CD8-positive, alpha-beta T cell (primary cell): ENCODE measurements at regions of chr6 and their contacts with region 1.

Region 1: GRCh38 chr6:81752138-81752920 is at the start of gene TENT5A:
- DNase-seq: peak; percentile 69 to 92 (median 85)
- ATAC-seq: peak; percentile 77
- H3K4me3 ChIP-seq: peak within 1 kb of the TSS; percentile 89 to 97
- H3K4me3 Mint-ChIP-seq: peak within 1 kb of the TSS; percentile 96
- H3K27ac ChIP-seq: peak within 1 kb of the TSS; percentile 82 to 87
- H3K27ac Mint-ChIP-seq: peak within 1 kb of the TSS; percentile 95
- H3K4me1 ChIP-seq: peaks cover 25% of the 10 kb centered on the region
- H3K4me1 Mint-ChIP-seq: peaks cover 41% of the 10 kb centered on the region
- H3K27me3 ChIP-seq: no peaks in the 10 kb centered on the region
- H3K27me3 Mint-ChIP-seq: peaks cover 13% of the 10 kb centered on the region
- CTCF ChIP-seq: no peak
- total RNA-seq, gene TENT5A: 7.5 to 7.7 TPM

Region 2: DNA sequence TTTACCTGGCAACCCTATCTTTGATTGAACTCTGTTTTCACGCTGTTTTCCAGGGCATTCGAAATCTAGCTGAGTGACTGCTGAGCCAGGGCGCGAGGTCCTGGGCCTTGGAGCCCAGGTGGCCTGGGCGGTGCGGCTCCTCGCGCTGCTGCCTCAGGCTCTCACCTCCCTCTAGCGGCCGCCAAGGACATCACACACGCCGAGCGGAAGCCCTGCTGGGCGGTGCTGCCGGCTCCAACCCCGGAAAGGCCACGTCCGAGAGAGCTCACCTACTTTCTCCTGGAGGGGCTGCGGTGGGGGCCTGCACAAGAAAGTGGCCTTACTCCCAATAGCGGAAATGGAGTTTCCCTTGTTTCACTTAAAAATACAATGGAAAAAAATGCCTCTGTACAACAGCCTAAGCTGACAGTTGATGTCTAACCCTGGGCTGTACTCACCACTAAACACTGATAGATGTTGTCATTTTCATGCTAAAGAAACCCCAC is 1882.7 kb before region 1 on chr6:
- CTCF ChIA-PET with region 1: no interaction called
- POLR2A ChIA-PET with region 1: no interaction called
- intact Hi-C with region 1: loop called (anchors 2 to 10 kb)
- DNase-seq: peak; percentile 57 to 87 (median 77)
- ATAC-seq: peak; percentile 100
- H3K4me3 ChIP-seq: peak overlapping the region in 1 of 2 experiments; percentile 29
- H3K4me3 Mint-ChIP-seq: peak overlapping the region; percentile 69
- H3K27ac ChIP-seq: no peak overlapping the region
- H3K27ac Mint-ChIP-seq: no peak overlapping the region
- H3K4me1 ChIP-seq: no peaks in the 10 kb centered on the region
- H3K4me1 Mint-ChIP-seq: peaks cover 10% of the 10 kb centered on the region
- H3K27me3 ChIP-seq: no peaks in the 10 kb centered on the region
- H3K27me3 Mint-ChIP-seq: peaks cover 4% of the 10 kb centered on the region
- CTCF ChIP-seq: peak; percentile 91

Region 3: DNA sequence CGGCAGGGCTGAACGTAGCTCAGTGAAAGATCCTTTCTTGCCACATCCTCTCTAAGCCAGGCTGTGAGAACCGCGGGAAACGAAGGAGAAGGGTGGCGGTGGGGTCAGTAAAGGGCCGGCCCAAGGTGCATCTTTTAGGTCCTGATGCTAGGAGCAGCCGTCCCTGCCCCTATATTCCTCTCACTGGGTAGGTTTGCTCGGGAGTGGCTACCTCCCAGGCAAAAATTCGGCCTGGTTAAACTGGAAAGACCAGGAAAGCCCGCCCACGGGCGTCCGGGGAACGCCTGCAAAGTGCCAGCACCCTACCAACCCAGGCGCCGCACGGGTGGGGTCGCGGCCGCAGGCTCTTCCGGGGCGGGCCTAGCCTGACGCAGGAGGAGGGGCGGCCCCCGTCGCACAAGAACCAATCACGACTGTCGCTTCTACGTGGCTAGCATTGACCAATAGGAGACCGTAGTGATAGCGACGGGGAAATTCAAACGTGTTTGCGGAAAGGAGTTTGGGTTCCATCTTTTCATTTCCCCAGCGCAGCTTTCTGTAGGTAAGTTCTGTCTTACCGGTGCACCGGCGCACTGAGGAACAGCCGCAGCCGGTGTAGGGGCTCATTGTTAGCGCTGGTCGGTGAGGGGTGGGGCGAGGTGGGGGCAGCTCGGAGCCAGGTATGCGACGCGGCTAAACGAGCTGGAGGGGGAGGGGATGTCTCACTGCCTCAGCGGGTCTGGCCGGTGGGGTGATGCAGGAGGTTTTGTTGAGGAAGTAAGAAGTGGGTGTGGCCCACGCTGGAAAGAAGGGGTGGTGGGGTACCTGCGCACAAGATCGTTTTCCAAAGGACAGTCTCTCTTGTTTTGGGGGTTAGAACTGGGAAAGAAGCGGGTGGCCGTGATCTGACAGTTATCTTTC is 1747.9 kb before region 1 on chr6 and contains the start of gene TTK:
- CTCF ChIA-PET with region 1: no interaction called
- POLR2A ChIA-PET with region 1: interaction called, 7 read pairs
- intact Hi-C with region 1: loop called in 1 of 2 experiments (anchors 1 kb)
- DNase-seq: peak; percentile 85 to 97 (median 90)
- ATAC-seq: peak; percentile 97
- H3K4me3 ChIP-seq: peak within 1 kb of the TSS; percentile 76 to 86
- H3K4me3 Mint-ChIP-seq: peak within 1 kb of the TSS; percentile 87
- H3K27ac ChIP-seq: peak within 1 kb of the TSS; percentile 84 to 95
- H3K27ac Mint-ChIP-seq: peak within 1 kb of the TSS; percentile 95
- H3K4me1 ChIP-seq: peaks cover 11% of the 10 kb centered on the region
- H3K4me1 Mint-ChIP-seq: peaks cover 24% of the 10 kb centered on the region
- H3K27me3 ChIP-seq: no peaks in the 10 kb centered on the region
- H3K27me3 Mint-ChIP-seq: peaks cover 5% of the 10 kb centered on the region
- CTCF ChIP-seq: no peak
- total RNA-seq, gene TTK: 0.30 to 0.97 TPM

Region 4: GRCh38 chr6:80133020-80133419 is 1619.3 kb before region 1 on chr6:
- CTCF ChIA-PET with region 1: no interaction called
- POLR2A ChIA-PET with region 1: no interaction called
- intact Hi-C with region 1: loop called in 1 of 2 experiments (anchors 10 kb)
- DNase-seq: peak in 6 of 9 experiments; percentile 6 to 39 (median 16)
- ATAC-seq: no peak
- H3K4me3 ChIP-seq: no peak overlapping the region
- H3K4me3 Mint-ChIP-seq: no peak overlapping the region
- H3K27ac ChIP-seq: no peak overlapping the region
- H3K27ac Mint-ChIP-seq: no peak overlapping the region
- H3K4me1 ChIP-seq: no peaks in the 10 kb centered on the region
- H3K4me1 Mint-ChIP-seq: no peaks in the 10 kb centered on the region
- H3K27me3 ChIP-seq: no peaks in the 10 kb centered on the region
- H3K27me3 Mint-ChIP-seq: no peaks in the 10 kb centered on the region
- CTCF ChIP-seq: no peak

Region 5: DNA sequence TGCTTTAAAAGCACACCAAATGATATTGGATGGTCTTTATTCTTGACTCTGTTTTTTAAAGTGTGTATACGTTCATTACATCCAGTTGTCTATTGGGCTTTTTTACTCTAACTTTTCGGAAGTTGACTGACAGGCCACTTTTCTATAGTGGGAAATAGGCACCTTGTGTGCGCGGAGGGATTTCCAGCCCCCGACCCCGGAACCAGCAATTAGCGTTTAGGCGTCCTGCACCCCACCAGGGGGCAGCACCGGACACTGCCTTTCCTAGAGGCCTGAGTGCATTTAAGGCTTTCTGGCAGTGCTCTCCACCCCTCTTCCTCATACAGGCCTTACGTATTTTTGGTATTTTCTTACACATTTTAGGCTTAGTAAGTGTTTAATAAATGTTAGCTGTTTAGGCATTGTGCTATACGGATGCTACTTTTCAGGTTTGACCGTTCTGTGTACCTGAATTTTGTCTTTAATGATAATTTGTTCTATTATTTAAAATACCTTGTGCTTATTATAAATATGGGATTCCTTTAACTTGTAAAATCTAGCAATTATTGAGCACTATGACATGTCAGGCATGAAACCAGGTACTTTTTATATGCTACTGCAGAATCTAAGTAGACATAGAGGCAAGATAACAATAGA is 1414.0 kb before region 1 on chr6:
- CTCF ChIA-PET with region 1: interaction called, 13 read pairs
- POLR2A ChIA-PET with region 1: no interaction called
- intact Hi-C with region 1: loop called in 1 of 2 experiments (anchors 1 kb)
- DNase-seq: peak; percentile 44 to 76 (median 67)
- ATAC-seq: peak; percentile 71
- H3K4me3 ChIP-seq: no peak overlapping the region
- H3K4me3 Mint-ChIP-seq: peak overlapping the region; percentile 16
- H3K27ac ChIP-seq: no peak overlapping the region
- H3K27ac Mint-ChIP-seq: no peak overlapping the region
- H3K4me1 ChIP-seq: no peaks in the 10 kb centered on the region
- H3K4me1 Mint-ChIP-seq: peaks cover 6% of the 10 kb centered on the region
- H3K27me3 ChIP-seq: no peaks in the 10 kb centered on the region
- H3K27me3 Mint-ChIP-seq: no peaks in the 10 kb centered on the region
- CTCF ChIP-seq: peak; percentile 84

Region 6: DNA sequence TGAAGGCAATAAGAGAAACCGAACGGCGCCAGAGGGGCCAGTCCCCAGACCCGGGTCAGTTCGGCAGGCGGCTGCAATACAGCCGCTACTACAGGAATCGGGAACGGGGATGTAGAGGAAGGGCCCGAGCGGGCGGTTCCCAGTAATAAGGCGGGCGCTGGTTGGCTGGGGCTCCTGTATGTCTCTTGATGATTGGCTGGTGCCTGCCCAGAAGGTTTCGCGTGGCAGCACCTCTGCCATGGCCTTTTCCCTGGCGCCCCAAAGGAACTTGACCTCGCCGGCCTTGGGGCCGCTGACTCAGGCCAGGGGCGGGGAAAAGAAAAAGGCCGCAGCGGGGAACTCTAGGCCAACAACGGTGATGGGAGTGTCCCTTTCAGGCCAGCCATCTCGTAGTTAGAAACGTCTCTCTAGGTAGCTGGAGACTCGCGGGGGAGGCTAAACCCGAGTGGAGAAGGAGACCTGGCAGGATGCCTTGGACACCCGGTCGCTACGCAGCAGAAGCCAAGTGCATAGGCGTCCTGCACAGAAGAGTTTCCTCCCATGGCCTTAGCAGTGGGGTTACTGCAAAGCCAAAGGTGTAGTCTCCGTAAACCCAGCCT is 495.4 kb after region 1 on chr6 and contains the start of gene IBTK:
- CTCF ChIA-PET with region 1: no interaction called
- POLR2A ChIA-PET with region 1: no interaction called
- intact Hi-C with region 1: loop called in 1 of 2 experiments (anchors 5 kb)
- DNase-seq: peak; percentile 84 to 97 (median 90)
- ATAC-seq: peak; percentile 85
- H3K4me3 ChIP-seq: peak within 1 kb of the TSS; percentile 93 to 98
- H3K4me3 Mint-ChIP-seq: peak within 1 kb of the TSS; percentile 98
- H3K27ac ChIP-seq: peak within 1 kb of the TSS; percentile 82 to 86
- H3K27ac Mint-ChIP-seq: peak within 1 kb of the TSS; percentile 97
- H3K4me1 ChIP-seq: peaks cover 24% of the 10 kb centered on the region
- H3K4me1 Mint-ChIP-seq: peaks cover 39% of the 10 kb centered on the region
- H3K27me3 ChIP-seq: no peaks in the 10 kb centered on the region
- H3K27me3 Mint-ChIP-seq: peaks cover 2% of the 10 kb centered on the region
- CTCF ChIP-seq: no peak
- total RNA-seq, gene IBTK: 9.7 to 9.9 TPM

Region 7: DNA sequence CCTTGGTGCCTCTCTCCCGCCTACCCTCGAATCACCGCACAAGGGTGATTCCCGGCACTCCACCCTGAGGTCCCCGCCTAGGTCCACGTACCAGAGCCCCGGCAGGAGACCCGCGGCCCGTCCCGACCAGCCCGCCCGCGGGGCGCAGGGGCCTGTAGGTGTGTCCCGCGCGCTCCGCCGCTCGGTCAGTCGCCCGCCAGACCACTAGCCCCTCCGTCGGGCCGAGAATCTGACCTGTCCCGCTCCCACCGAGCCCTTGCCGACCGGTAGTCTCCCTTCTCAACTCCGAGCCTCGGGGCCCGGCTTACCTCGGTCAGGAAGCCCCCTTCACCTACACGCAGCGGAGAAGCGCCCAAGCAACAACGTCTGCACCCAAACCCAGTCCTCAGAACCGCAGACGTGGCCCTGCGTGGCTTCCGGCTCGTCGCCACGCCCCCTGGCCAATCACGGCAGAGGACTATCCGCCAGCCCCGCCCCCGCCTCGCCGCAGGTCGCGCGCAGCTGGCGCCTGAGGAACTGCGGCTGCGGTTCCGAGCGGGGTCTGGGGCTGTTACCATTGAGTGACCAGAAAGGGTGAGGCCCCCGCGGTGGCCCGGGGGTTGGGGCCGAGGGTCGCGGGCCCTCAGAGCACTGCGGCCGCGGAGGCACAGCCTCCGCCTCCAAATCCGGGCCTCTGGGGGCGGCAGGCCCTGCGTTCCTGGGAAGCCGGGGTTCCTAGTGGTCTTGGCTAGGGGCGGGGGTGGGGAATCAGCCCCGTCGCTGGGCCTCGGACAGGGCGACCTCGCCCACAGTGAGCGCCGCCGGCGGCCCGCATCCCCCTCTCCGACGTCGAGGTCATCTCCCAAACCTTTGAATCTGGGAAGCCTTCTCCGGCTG is 1440.8 kb after region 1 on chr6 and contains the starts of genes PGM3 and RWDD2A:
- CTCF ChIA-PET with region 1: no interaction called
- POLR2A ChIA-PET with region 1: no interaction called
- intact Hi-C with region 1: loop called in 1 of 2 experiments (anchors 5 kb)
- DNase-seq: peak; percentile 74 to 95 (median 90)
- ATAC-seq: peak; percentile 97
- H3K4me3 ChIP-seq: peak within 1 kb of the TSS; percentile 82 to 84
- H3K4me3 Mint-ChIP-seq: peak within 1 kb of the TSS; percentile 99
- H3K27ac ChIP-seq: peak within 1 kb of the TSS; percentile 51 to 82
- H3K27ac Mint-ChIP-seq: peak within 1 kb of the TSS; percentile 98
- H3K4me1 ChIP-seq: peaks cover 14% of the 10 kb centered on the region
- H3K4me1 Mint-ChIP-seq: peaks cover 53% of the 10 kb centered on the region
- H3K27me3 ChIP-seq: no peaks in the 10 kb centered on the region
- H3K27me3 Mint-ChIP-seq: no peaks in the 10 kb centered on the region
- CTCF ChIP-seq: no peak
- total RNA-seq, gene PGM3: 25.8 to 26.4 TPM
- total RNA-seq, gene RWDD2A: 2.1 to 2.2 TPM